ENCODE measurements at regions of chr11 and their contacts with region 1.

Region 1: DNA sequence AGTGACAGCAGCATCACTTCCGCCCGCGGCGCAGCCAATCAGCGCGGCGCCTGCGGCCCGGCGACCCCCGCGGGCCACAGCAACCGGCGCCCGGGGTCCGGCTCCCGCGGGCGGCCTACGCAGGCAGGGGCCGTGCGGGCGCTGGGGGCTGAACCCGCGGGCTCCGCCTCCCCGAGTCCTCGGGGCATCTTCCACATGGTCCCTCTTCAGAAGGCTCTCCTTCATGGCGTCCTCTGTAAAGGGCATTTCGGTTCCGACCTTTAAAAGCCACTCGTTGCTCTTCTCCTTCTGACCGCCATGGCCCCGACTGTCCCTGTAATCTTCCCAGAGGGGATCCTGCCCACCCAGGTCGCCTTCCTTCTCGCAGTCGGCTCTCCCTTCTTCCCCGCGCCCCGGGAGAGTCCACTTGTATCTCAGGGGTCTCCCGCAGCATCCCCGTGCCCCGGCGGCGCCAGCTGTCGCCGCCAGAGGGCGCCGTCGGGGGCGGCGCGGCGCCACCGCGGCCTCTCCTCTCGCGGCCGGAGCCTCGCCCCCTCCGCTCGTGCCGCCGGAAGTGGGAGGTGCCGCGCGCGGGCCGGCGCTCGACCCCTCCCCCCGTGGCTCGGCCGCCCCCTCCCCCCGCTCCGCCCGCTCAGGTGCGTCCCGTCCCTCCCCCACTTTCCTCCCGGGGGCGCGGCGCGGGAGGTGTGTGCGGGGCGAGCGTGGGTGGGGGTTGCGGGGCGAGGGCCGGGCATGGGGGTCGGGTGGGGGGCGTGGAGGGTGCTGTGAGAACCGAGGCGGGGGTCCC is at the start of gene RNF214:
- DNase-seq: peak; percentile 86
- ATAC-seq: peak; percentile 74
- H3K4me3 Mint-ChIP-seq: peak within 1 kb of the TSS; percentile 87
- H3K27ac Mint-ChIP-seq: peak within 1 kb of the TSS; percentile 100
- H3K4me1 Mint-ChIP-seq: peaks cover 34% of the 10 kb centered on the region
- H3K27me3 Mint-ChIP-seq: no peaks in the 10 kb centered on the region
- total RNA-seq, gene RNF214: 19.3 to 24.6 TPM

Region 2: GRCh38 chr11:116772443-116773202 is 459.7 kb before region 1 on chr11 and contains the start of gene BUD13:
- CTCF ChIA-PET with region 1: interaction called, 4 read pairs
- POLR2A ChIA-PET with region 1: interaction called, 3 read pairs
- intact Hi-C with region 1: loop called (anchors 1 to 5 kb)
- DNase-seq: peak; percentile 97
- ATAC-seq: peak; percentile 91
- H3K4me3 Mint-ChIP-seq: peak within 1 kb of the TSS; percentile 95
- H3K27ac Mint-ChIP-seq: peak within 1 kb of the TSS; percentile 98
- H3K4me1 Mint-ChIP-seq: peaks cover 56% of the 10 kb centered on the region
- H3K27me3 Mint-ChIP-seq: no peaks in the 10 kb centered on the region
- total RNA-seq, gene BUD13: 30.2 to 35.6 TPM

Region 3: GRCh38 chr11:116927163-116927974 is 304.9 kb before region 1 on chr11:
- CTCF ChIA-PET with region 1: no interaction called
- POLR2A ChIA-PET with region 1: interaction called, 4 read pairs
- intact Hi-C with region 1: loop called in 1 of 2 experiments (anchors 2 kb)
- DNase-seq: peak; percentile 72
- ATAC-seq: peak; percentile 33
- H3K4me3 Mint-ChIP-seq: peak overlapping the region; percentile 18
- H3K27ac Mint-ChIP-seq: peak overlapping the region; percentile 49
- H3K4me1 Mint-ChIP-seq: peaks cover 74% of the 10 kb centered on the region
- H3K27me3 Mint-ChIP-seq: no peaks in the 10 kb centered on the region

Region 4: DNA sequence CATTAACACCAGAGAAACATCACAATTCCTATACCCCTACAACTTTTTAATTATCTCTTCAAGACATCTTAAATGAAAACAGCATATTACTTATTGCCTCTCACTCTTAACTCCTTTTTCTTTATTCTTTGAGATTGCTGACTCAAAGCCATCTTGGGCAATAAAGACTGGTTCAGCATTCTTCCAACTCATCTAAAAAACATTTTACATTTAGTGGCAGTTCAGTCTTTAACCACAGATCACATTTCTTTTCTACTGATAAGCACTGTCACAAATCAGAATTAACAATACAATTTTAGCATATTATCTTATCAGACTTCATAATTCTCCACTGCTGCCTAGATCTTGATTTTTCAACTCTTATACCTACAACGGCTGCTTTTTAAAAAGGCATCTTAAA is 168.0 kb before region 1 on chr11:
- CTCF ChIA-PET with region 1: no interaction called
- POLR2A ChIA-PET with region 1: no interaction called
- intact Hi-C with region 1: loop called in 1 of 2 experiments (anchors 2 kb)
- DNase-seq: no peak
- ATAC-seq: no peak
- H3K4me3 Mint-ChIP-seq: peak overlapping the region; percentile 26
- H3K27ac Mint-ChIP-seq: peak overlapping the region; percentile 28
- H3K4me1 Mint-ChIP-seq: peaks cover 63% of the 10 kb centered on the region
- H3K27me3 Mint-ChIP-seq: no peaks in the 10 kb centered on the region

Region 5: DNA sequence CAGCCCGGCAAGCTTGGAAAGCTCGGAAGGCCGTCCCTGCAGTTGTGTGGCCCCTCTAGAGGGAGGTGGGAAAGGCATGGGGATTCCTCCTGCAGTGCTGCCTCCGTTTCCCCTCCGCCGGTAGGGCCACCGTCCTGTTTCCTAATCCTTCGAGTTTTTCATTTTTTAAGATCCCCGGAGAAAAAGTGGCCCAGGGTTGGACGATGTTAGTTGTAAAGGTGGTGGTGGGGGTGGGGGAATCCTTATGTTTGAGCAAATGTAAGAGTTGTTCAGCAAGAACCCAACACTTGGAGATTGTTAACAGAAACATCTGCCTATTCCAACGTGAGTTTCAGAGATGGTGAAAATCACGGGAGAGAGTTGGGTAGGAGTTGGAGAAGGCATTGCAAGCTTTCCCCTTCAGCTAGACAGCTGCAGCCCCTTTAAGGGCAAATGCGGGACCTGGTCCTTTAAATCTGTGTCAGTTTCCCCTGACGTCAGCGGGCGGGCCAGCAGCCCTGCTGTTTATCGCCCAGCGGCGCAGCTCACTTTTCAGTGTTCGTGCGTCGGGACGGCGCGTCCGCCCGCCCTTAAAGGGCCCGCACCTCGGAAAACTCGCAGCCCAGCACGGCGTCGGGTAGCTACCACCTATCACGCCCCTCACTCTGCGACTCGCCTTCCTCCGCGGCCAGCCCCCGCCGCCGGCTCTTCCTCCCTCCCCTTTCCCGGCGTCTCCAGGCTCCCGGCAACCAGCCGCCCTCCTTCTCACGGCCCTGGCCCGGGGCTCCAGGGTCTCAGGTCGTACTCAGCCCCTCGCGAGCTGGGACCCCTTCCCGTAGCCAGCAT is 53.9 kb before region 1 on chr11 and contains the start of gene SIDT2:
- CTCF ChIA-PET with region 1: interaction called, 64 read pairs
- POLR2A ChIA-PET with region 1: interaction called, 7 read pairs
- intact Hi-C with region 1: loop called in 1 of 2 experiments (anchors 1 kb)
- DNase-seq: peak; percentile 95
- ATAC-seq: peak; percentile 91
- H3K4me3 Mint-ChIP-seq: peak within 1 kb of the TSS; percentile 87
- H3K27ac Mint-ChIP-seq: peak within 1 kb of the TSS; percentile 75
- H3K4me1 Mint-ChIP-seq: peaks cover 33% of the 10 kb centered on the region
- H3K27me3 Mint-ChIP-seq: no peaks in the 10 kb centered on the region
- total RNA-seq, gene SIDT2: 21.5 to 23.7 TPM

Region 6: DNA sequence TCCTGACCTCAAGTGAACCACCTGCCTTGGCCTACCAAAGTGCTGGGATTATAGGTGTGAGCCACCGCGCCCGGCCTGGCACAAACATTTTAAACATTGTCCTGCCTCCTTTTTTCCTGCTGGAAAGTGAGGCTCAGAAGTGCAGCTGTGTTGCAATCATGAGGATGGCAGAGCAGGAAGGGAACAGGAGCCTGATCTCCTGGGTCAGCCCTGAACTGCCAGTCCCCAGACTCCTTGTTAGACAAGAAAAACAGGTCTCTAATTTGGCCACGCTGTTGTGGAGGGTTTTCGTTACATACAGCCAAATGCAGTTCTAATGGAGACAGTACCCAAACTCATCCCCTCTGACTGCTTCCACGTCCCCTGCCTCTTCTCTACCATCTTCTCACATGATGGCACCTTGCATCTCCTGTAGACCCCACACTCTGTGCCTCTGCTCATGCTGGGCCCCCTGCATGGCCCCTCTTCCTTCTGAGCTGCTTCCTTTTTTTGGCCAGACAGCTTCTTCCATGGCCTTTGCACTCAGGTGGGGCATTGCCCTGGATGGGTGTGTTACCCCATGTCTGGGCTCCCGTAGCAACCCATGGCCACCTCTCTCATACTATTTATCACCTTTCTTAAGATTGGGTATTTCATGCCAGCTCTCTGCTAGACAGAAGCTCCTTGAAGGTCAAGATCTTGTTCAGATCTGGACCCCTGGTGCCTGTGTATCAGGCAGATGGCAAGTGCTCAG is 322.5 kb after region 1 on chr11:
- CTCF ChIA-PET with region 1: no interaction called
- POLR2A ChIA-PET with region 1: no interaction called
- intact Hi-C with region 1: no loop called
- DNase-seq: no peak
- ATAC-seq: no peak
- H3K4me3 Mint-ChIP-seq: no peak overlapping the region
- H3K27ac Mint-ChIP-seq: no peak overlapping the region
- H3K4me1 Mint-ChIP-seq: no peaks in the 10 kb centered on the region
- H3K27me3 Mint-ChIP-seq: peaks cover 6% of the 10 kb centered on the region

Region 7: GRCh38 chr11:117985953-117986887 is 753.9 kb after region 1 on chr11 and contains the start of gene IL10RA:
- CTCF ChIA-PET with region 1: no interaction called
- POLR2A ChIA-PET with region 1: no interaction called
- intact Hi-C with region 1: loop called in 1 of 2 experiments (anchors 2 kb)
- DNase-seq: peak; percentile 90
- ATAC-seq: peak; percentile 80
- H3K4me3 Mint-ChIP-seq: peak within 1 kb of the TSS; percentile 96
- H3K27ac Mint-ChIP-seq: peak within 1 kb of the TSS; percentile 96
- H3K4me1 Mint-ChIP-seq: peaks cover 76% of the 10 kb centered on the region
- H3K27me3 Mint-ChIP-seq: no peaks in the 10 kb centered on the region
- total RNA-seq, gene IL10RA: 57.1 to 79.4 TPM

Region 8: DNA sequence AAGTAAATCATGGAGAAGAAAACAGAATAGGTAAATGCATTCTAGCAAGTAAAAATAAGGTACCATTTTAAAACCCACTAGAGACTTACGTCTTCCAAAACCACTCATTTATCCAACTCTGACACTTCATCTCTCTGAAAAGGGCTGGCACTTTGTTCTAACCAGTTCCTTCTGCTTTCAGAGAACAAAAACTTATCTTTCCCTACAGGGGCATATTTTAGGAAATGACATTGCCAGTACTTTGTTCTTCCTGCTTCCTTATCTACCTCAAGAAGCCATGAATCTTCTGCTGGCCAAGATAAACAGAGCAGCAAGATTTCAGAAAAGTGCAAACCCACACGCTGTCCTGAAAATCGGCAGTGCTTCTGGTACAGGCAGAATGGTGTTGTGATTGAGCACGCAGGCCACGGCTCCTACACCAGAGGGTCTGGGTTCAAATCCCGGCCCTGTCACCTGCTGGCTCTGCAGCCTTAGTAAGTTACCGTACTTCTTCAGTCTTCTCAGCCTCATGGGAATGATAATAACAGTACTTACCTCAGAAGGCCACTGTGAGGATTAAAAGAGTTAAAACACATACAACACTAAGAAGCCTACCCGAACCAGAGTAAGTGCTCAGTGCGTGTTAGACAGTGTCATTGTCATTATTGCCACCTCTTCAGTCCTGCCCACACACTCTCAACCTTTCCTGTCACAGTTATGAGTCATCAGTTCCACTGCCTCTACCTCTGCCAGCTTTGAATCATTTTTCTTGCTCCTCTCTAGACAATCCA is 1008.9 kb after region 1 on chr11:
- CTCF ChIA-PET with region 1: no interaction called
- POLR2A ChIA-PET with region 1: no interaction called
- intact Hi-C with region 1: loop called in 1 of 2 experiments (anchors 1 kb)
- DNase-seq: peak; percentile 82
- ATAC-seq: peak; percentile 87
- H3K4me3 Mint-ChIP-seq: peak overlapping the region; percentile 77
- H3K27ac Mint-ChIP-seq: peak overlapping the region; percentile 94
- H3K4me1 Mint-ChIP-seq: peaks cover 88% of the 10 kb centered on the region
- H3K27me3 Mint-ChIP-seq: no peaks in the 10 kb centered on the region